ENCODE measurements at regions of chr20 and their contacts with region 1.

Region 1: DNA sequence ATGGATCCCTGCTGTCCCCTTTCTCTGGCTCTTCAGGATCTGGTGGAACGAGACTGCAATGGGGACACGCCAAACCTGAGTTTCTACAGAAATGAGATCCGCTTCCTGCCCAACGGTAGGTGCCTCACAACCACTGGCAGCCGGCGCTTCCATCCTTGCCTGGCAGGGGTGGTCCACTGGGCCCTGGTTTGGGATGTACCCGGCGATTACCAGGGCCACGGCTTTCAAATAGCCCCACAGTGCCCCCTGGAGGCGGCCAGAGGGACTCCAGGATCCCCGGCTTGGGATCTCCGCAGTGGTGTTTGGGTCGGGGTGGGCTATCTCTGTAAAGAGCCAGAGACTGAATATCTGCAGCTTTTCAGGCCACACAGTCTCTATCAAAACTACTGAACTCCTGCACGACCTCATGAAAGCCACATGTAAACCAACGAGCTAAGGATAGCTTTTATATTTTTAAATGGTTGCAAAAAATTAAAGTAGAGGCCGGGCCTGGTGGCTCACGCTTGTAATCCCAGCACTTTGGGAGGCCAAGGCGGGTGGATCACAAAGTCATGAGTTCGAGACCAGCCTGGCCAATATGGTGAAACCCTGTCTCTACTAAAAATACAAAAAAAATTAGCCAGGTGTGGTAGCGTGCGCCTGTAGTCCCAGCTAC is 3.7 kb downstream of the OGFR start:
- H3K4me3 Mint-ChIP-seq: no peak overlapping the region
- H3K27ac Mint-ChIP-seq: no peak overlapping the region
- H3K4me1 Mint-ChIP-seq: peaks cover 75% of the 10 kb centered on the region
- H3K27me3 Mint-ChIP-seq: peaks cover 13% of the 10 kb centered on the region

Region 2: DNA sequence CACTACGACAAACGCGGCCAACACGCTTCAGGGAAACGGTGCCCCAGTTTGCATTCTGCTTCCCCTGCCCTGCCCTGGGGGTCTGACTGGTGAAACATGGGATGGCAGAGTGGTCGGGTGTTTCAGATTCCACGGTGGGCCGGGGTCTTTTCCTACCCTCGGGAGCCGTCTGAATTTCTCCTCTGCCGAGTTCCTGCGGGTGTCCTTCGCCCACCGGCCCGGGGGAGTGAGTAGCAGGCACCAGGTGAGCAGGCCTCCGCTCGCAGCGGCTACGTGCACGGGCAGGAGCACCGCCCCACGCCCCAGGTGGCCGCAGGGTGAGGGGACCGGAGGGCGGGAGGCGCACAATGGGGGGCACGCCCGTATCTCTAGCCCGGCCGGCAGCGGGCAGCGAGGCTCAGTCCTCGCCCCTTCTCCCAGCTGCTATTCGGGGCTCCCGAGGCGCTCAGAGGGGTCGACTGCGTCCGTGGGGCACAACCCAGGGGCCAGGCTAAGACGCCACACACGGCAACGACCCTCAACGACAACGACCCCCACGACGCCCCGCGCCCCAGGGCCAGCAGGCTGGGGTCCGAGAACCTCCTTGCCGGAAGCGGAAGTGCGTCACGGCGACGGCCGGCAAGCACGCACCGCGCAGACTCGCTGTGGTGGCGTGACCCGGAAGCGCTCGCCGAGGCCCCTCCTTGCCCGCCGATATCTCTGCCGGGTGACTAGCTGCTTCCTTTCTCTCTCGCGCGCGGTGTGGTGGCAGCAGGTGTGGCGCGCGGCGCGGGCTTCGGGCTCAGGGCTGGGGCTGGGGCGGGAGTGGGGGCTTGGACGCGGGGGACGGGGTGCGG is 421.7 kb before region 1 on chr20 and contains the start of gene RPS21:
- intact Hi-C with region 1: loop called (anchors 10 kb)
- H3K4me3 Mint-ChIP-seq: peak within 1 kb of the TSS; percentile 87
- H3K27ac Mint-ChIP-seq: peak within 1 kb of the TSS; percentile 83
- H3K4me1 Mint-ChIP-seq: peaks cover 55% of the 10 kb centered on the region
- H3K27me3 Mint-ChIP-seq: no peaks in the 10 kb centered on the region

Region 3: DNA sequence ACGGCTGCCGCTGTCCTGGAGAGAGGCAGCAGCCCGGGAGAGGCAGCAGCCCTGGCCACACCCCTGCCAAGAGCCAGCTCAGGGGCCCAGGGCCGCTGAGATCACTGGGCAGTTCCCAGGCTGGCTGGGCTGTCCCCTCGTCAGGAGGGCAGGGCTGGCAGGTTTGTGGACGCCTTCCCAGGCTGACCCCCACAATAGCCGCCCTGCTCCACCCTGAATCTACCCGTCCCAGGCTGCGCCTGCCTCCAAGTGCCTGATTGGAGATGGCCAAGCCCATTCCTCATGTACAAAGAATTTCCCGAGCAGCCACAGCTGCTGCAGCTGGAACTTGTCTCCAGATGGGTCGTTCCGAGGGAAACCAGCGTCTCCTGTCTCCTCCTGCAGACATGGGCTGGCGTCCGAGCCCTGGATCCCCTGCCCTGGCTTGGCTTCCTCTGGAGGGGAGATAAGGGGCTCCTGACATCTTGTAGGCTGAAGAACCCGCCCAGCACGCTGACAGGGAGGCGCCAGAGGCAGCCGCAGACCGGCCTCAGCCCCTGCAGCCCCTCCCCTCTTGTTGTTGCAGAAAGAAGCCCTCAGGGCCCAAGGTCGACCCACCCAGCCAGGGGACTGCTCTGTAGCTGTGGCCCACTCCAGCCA is 323.2 kb before region 1 on chr20:
- intact Hi-C with region 1: no loop called
- H3K4me3 Mint-ChIP-seq: no peak overlapping the region
- H3K27ac Mint-ChIP-seq: no peak overlapping the region
- H3K4me1 Mint-ChIP-seq: peaks cover 10% of the 10 kb centered on the region
- H3K27me3 Mint-ChIP-seq: peaks cover 91% of the 10 kb centered on the region

Region 4: GRCh38 chr20:62500237-62500864 is 308.0 kb before region 1 on chr20:
- intact Hi-C with region 1: loop called (anchors 5 kb)
- H3K4me3 Mint-ChIP-seq: no peak overlapping the region
- H3K27ac Mint-ChIP-seq: peak overlapping the region; percentile 20
- H3K4me1 Mint-ChIP-seq: peaks cover 30% of the 10 kb centered on the region
- H3K27me3 Mint-ChIP-seq: peaks cover 11% of the 10 kb centered on the region

Region 5: GRCh38 chr20:62668441-62669027 is 139.8 kb before region 1 on chr20:
- intact Hi-C with region 1: loop called (anchors 5 kb)
- H3K4me3 Mint-ChIP-seq: no peak overlapping the region
- H3K27ac Mint-ChIP-seq: no peak overlapping the region
- H3K4me1 Mint-ChIP-seq: peaks cover 64% of the 10 kb centered on the region
- H3K27me3 Mint-ChIP-seq: peaks cover 9% of the 10 kb centered on the region

Region 6: GRCh38 chr20:62822788-62823651 is 14.7 kb after region 1 on chr20:
- intact Hi-C with region 1: no loop called
- H3K4me3 Mint-ChIP-seq: no peak overlapping the region
- H3K27ac Mint-ChIP-seq: no peak overlapping the region
- H3K4me1 Mint-ChIP-seq: peaks cover 5% of the 10 kb centered on the region
- H3K27me3 Mint-ChIP-seq: peaks cover 33% of the 10 kb centered on the region